HEK293T (cell line): ENCODE measurements at regions of chr1 and their contacts with region 1.

Region 1: GRCh38 chr1:10338047-10338446 is 60.8 kb upstream of the PGD start:
- DNase-seq: peak; percentile 62

Region 2: GRCh38 chr1:10007169-10007568 is 330.9 kb before region 1 on chr1:
- CTCF ChIA-PET with region 1: interaction called, 10 read pairs
- POLR2A ChIA-PET with region 1: no interaction called
- DNase-seq: no peak